HepG2 (cell line): ENCODE measurements at regions of chr2 and their contacts with region 1.

Region 1: GRCh38 chr2:104521247-104521646 is 332.7 kb upstream of the POU3F3 start:
- DNase-seq: peak; percentile 15
- ATAC-seq: peak; percentile 73
- H3K4me3 ChIP-seq: no peak overlapping the region
- H3K27ac ChIP-seq: no peak overlapping the region
- H3K4me1 ChIP-seq: no peaks in the 10 kb centered on the region
- H3K27me3 ChIP-seq: 0 out of 5 replicates have a peak, but pooled peaks cover 0 to 2% of the 10 kb centered on the region in 2 experiments
- CTCF ChIP-seq: peak; percentile 63
- EP300 ChIP-seq: no peak
- POLR2A ChIP-seq: no peak
- RAD21 ChIP-seq: no peak

Region 2: GRCh38 chr2:104033399-104033798 is 487.8 kb before region 1 on chr2:
- CTCF ChIA-PET with region 1: no interaction called
- POLR2A ChIA-PET with region 1: no interaction called
- in situ Hi-C with region 1: no loop called
- intact Hi-C with region 1: loop called (anchors 5 kb)
- DNase-seq: no peak
- ATAC-seq: no peak; the same call in 2 of the 3 replicates
- H3K4me3 ChIP-seq: no peak overlapping the region
- H3K27ac ChIP-seq: no peak overlapping the region
- H3K4me1 ChIP-seq: no peaks in the 10 kb centered on the region
- H3K27me3 ChIP-seq: no peaks in the 10 kb centered on the region
- CTCF ChIP-seq: 0 out of 2 replicates have a peak, but pooled peaks have one; percentile 46
- EP300 ChIP-seq: no peak
- POLR2A ChIP-seq: no peak
- RAD21 ChIP-seq: no peak

Region 3: DNA sequence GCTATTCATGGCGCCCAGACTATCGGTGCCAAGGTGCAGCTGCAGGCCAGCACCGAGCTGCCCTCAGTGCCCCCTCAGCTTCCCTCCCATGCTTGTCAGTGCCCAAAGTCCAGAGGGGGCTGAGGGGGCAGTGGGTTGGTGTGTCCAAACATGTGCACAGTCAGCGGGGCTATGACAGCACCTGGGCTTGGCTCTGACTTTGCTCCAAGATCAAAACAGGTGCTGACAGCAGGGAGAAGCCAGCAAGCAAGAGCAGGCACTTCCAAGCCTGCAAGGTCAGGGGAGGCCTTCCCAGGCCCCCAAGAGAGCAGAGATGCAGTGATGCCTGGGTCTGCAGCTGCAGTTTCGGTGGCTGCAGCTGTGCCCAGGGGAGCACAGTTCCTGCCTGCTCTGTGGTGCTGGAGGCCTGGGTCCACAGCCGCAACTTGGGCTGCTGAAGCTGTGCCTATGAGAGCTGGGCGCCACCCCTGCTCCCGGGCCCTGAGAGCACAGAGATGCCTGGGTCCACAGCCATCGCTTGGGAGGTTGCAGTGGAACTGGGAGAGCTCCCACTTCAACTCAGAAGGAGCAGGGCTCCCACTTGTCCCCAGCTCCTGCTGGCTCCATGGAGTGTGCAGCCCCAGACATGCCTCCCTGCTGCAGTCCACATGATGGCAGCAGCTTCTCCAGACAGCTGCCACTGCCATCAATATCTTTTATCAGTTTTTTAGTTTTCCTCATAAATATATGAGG is 442.6 kb before region 1 on chr2:
- CTCF ChIA-PET with region 1: no interaction called
- POLR2A ChIA-PET with region 1: no interaction called
- in situ Hi-C with region 1: no loop called
- intact Hi-C with region 1: loop called (anchors 5 kb)
- DNase-seq: no peak
- ATAC-seq: peak; percentile 93
- H3K4me3 ChIP-seq: no peak overlapping the region
- H3K27ac ChIP-seq: no peak overlapping the region
- H3K4me1 ChIP-seq: no peaks in the 10 kb centered on the region
- H3K27me3 ChIP-seq: no peaks in the 10 kb centered on the region
- CTCF ChIP-seq: peak; percentile 41; the same call in 1 of the 2 replicates
- EP300 ChIP-seq: no peak
- POLR2A ChIP-seq: no peak
- RAD21 ChIP-seq: no peak

Region 4: GRCh38 chr2:104481371-104481805 is 39.9 kb before region 1 on chr2:
- CTCF ChIA-PET with region 1: no interaction called
- POLR2A ChIA-PET with region 1: no interaction called
- in situ Hi-C with region 1: no loop called
- intact Hi-C with region 1: loop called (anchors 5 kb)
- DNase-seq: no peak
- ATAC-seq: peak; percentile 68
- H3K4me3 ChIP-seq: no peak overlapping the region
- H3K27ac ChIP-seq: no peak overlapping the region
- H3K4me1 ChIP-seq: peaks cover 28% of the 10 kb centered on the region
- H3K27me3 ChIP-seq: 0 out of 5 replicates have a peak, but pooled peaks cover 0 to 4% of the 10 kb centered on the region in 2 experiments
- CTCF ChIP-seq: no peak
- EP300 ChIP-seq: no peak
- POLR2A ChIP-seq: no peak
- RAD21 ChIP-seq: no peak